Naive thymus-derived CD4-positive, alpha-beta T cell (primary cell): ENCODE measurements at regions of chr6 and their contacts with region 1.

Region 1: DNA sequence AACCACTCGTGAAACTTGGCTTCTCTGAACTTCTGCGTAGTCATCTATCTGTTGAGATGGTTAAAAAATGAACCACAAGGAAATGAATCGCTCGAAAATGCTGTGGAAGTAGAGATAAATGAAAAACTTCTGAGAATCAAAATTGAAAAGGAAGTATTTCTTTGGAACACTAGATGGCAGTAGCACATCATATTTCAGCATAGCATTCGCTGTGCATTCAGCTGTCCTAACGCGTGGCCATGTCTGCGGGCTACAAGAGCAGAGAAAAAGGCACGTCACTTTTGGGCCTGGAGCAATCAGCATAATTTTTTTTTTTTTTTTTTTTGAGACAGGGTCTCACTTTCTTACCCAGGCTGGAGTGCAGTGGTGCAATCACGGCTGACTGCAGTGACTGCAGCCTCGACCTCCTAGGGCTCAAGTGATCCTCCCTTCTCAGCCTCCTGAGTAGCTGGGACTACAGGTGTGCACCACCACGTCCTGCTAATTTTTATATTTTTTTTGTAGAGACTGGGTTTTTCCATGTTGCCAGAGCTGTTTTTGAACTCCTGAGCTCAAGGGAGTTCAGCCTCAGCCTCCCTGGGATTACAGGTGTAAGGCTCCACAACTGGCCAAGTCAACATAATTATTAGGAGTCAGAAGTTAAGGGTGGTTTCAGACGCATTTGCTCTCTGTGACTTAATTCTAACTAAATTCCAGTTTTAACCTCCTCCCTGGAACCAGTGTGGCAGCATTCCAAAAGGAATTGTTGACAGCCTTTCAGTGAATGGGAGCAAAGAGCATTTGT is 8.8 kb upstream of the PERP start:
- DNase-seq: peak in 7 of 9 donors; percentile 39 to 68 (median 57)
- ATAC-seq: peak; percentile 94
- H3K4me3 ChIP-seq: no peak overlapping the region
- H3K4me3 Mint-ChIP-seq: no peak overlapping the region
- H3K27ac ChIP-seq: no peak overlapping the region
- H3K27ac Mint-ChIP-seq: no peak overlapping the region
- H3K4me1 ChIP-seq: peaks cover 0 to 4% of the 10 kb centered on the region in 2 donors
- H3K4me1 Mint-ChIP-seq: peaks cover 5 to 10% (median 7%) of the 10 kb centered on the region in 7 donors
- H3K27me3 ChIP-seq: no peaks in the 10 kb centered on the region
- H3K27me3 Mint-ChIP-seq: peaks cover 21 to 49% (median 30%) of the 10 kb centered on the region in 5 donors

Region 2: DNA sequence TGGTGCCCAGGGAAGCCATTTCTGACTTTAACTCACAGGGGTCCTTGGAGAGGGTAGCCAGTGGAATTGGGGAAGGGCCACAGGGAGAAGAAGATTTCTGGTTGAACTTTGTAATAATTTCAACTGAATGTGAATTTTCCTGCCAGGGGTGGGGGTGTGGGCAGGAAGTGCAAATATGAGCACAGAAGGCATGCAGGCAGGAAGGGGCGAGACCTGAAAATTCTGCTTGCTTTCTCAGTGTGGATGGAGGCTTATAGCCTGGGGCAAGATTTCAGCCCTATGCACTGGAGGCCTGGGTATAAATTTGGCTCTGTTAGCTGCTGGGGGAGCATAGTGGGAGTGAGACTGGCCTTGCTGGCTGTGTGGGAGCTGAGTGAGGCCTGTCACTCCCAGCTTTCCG is 63.3 kb before region 1 on chr6:
- CTCF ChIA-PET with region 1: no interaction called
- POLR2A ChIA-PET with region 1: no interaction called
- intact Hi-C with region 1: no loop called
- DNase-seq: no peak
- ATAC-seq: no peak
- H3K4me3 ChIP-seq: no peak overlapping the region
- H3K4me3 Mint-ChIP-seq: no peak overlapping the region
- H3K27ac ChIP-seq: no peak overlapping the region
- H3K27ac Mint-ChIP-seq: no peak overlapping the region
- H3K4me1 ChIP-seq: no peaks in the 10 kb centered on the region
- H3K4me1 Mint-ChIP-seq: peaks cover 0 to 4% (median 0%) of the 10 kb centered on the region in 7 donors
- H3K27me3 ChIP-seq: no peaks in the 10 kb centered on the region
- H3K27me3 Mint-ChIP-seq: peaks cover 37 to 65% (median 48%) of the 10 kb centered on the region in 5 donors

Region 3: GRCh38 chr6:138211027-138211581 is 95.0 kb after region 1 on chr6:
- CTCF ChIA-PET with region 1: no interaction called
- POLR2A ChIA-PET with region 1: no interaction called
- intact Hi-C with region 1: loop called in 1 of 2 experiments (anchors 1 kb)
- DNase-seq: no peak
- ATAC-seq: no peak
- H3K4me3 ChIP-seq: no peak overlapping the region
- H3K4me3 Mint-ChIP-seq: no peak overlapping the region
- H3K27ac ChIP-seq: no peak overlapping the region
- H3K27ac Mint-ChIP-seq: no peak overlapping the region
- H3K4me1 ChIP-seq: no peaks in the 10 kb centered on the region
- H3K4me1 Mint-ChIP-seq: peaks cover 0 to 2% (median 0%) of the 10 kb centered on the region in 7 donors
- H3K27me3 ChIP-seq: no peaks in the 10 kb centered on the region
- H3K27me3 Mint-ChIP-seq: peaks cover 12 to 48% (median 30%) of the 10 kb centered on the region in 5 donors

Region 4: DNA sequence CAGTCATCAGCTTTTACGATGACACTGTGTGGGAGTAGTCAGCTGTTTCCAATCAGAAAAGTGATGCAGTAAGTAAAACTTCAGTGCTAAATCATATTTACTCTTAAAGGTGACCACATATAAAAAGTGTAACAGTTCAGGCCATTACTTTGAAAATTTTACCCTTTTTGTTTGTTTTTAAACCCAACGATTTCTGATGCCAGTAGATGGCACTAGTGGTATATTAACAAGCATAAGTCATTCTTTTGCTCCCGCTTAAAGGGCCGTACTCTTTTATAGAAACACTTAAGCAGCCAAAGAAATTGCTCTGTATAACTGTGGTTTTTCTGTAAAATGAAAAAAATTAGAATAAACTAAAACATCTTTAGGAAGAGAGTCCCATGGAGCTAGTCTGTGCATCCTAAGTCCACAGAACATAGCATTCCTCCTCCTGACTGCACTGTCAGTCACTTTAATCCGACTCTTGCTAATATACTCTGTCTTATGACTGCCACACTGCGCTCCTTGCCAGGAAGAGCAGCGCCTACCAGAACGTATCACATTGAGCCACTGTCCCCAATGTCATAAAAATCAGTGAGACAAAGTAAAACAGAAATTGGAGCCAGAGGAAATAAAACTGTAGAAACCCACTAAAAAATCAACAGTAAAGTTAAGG is 313.0 kb after region 1 on chr6:
- CTCF ChIA-PET with region 1: interaction called, 11 read pairs
- POLR2A ChIA-PET with region 1: no interaction called
- intact Hi-C with region 1: loop called (anchors 1 kb)
- DNase-seq: peak in 7 of 9 donors; percentile 28 to 62 (median 43)
- ATAC-seq: peak; percentile 71
- H3K4me3 ChIP-seq: no peak overlapping the region
- H3K4me3 Mint-ChIP-seq: no peak overlapping the region
- H3K27ac ChIP-seq: no peak overlapping the region
- H3K27ac Mint-ChIP-seq: no peak overlapping the region
- H3K4me1 ChIP-seq: no peaks in the 10 kb centered on the region
- H3K4me1 Mint-ChIP-seq: peaks cover 0 to 6% (median 0%) of the 10 kb centered on the region in 7 donors
- H3K27me3 ChIP-seq: no peaks in the 10 kb centered on the region
- H3K27me3 Mint-ChIP-seq: peaks cover 0 to 7% (median 5%) of the 10 kb centered on the region in 5 donors

Region 5: GRCh38 chr6:138517635-138518034 is 401.6 kb after region 1 on chr6:
- CTCF ChIA-PET with region 1: interaction called, 31 read pairs
- POLR2A ChIA-PET with region 1: no interaction called
- intact Hi-C with region 1: loop called (anchors 1 kb)
- DNase-seq: peak; percentile 15 to 63 (median 40)
- ATAC-seq: peak; percentile 80
- H3K4me3 ChIP-seq: no peak overlapping the region
- H3K4me3 Mint-ChIP-seq: no peak overlapping the region
- H3K27ac ChIP-seq: no peak overlapping the region
- H3K27ac Mint-ChIP-seq: no peak overlapping the region
- H3K4me1 ChIP-seq: peaks cover 0 to 13% of the 10 kb centered on the region in 2 donors
- H3K4me1 Mint-ChIP-seq: peaks cover 0 to 23% (median 7%) of the 10 kb centered on the region in 7 donors
- H3K27me3 ChIP-seq: no peaks in the 10 kb centered on the region
- H3K27me3 Mint-ChIP-seq: peaks cover 9 to 17% (median 12%) of the 10 kb centered on the region in 5 donors

Region 6: DNA sequence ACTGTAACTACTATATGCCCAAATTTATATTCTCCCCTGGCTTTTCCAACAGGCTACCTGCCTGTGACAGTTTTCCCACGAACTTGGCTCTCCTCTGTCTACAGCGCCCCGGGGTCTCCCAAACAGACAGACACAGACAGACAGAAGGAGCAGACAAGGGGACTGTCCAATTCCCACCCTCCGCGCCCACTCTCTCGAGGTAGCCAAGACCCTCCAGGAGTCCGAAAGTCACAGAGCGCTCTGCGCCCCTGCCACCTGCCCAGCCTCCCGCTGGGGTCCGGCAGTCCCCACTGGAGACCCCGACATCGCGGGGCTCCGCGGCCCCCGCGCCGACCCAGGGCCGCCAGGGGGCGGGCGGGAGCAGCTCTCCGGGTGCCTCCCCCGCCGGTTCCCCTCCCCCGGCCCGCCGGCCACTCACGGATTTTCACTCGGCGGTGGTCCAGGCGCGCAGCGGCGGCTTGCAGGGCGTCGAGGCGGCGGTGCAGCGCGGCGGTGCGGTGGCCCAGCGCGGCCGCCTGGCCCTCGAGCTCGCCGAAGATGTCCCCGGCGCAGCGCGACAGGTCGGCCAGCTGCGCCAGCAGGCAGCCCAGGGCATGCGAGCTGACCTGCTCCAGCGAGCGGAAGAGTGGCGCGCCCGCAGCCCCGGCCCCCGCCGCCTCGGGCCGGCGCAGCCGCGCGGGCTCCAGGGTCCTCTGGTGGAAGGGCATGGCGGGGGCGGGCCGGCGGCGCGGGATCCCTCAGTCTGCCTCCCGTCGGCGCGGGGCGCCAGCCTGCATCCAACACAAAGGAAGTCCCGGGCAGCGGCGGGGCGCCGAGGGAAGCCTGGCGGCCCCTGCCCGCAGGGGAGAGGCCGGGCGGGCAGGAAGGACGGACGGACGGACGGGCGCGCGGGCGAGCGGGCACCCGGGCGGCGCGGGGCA is 576.2 kb after region 1 on chr6:
- CTCF ChIA-PET with region 1: no interaction called
- POLR2A ChIA-PET with region 1: no interaction called
- intact Hi-C with region 1: loop called (anchors 5 to 10 kb)
- DNase-seq: peak; percentile 20 to 74 (median 37)
- ATAC-seq: peak; percentile 80
- H3K4me3 ChIP-seq: peak overlapping the region; percentile 22
- H3K4me3 Mint-ChIP-seq: peak overlapping the region; percentile 53 to 88 (median 86)
- H3K27ac ChIP-seq: no peak overlapping the region
- H3K27ac Mint-ChIP-seq: peak overlapping the region in 2 of 9 donors; percentile 49 to 77
- H3K4me1 ChIP-seq: peaks cover 0 to 3% of the 10 kb centered on the region in 2 donors
- H3K4me1 Mint-ChIP-seq: peaks cover 0 to 13% (median 9%) of the 10 kb centered on the region in 7 donors
- H3K27me3 ChIP-seq: peaks cover 0 to 6% of the 10 kb centered on the region in 2 donors
- H3K27me3 Mint-ChIP-seq: peaks cover 23 to 56% (median 46%) of the 10 kb centered on the region in 5 donors

Region 7: DNA sequence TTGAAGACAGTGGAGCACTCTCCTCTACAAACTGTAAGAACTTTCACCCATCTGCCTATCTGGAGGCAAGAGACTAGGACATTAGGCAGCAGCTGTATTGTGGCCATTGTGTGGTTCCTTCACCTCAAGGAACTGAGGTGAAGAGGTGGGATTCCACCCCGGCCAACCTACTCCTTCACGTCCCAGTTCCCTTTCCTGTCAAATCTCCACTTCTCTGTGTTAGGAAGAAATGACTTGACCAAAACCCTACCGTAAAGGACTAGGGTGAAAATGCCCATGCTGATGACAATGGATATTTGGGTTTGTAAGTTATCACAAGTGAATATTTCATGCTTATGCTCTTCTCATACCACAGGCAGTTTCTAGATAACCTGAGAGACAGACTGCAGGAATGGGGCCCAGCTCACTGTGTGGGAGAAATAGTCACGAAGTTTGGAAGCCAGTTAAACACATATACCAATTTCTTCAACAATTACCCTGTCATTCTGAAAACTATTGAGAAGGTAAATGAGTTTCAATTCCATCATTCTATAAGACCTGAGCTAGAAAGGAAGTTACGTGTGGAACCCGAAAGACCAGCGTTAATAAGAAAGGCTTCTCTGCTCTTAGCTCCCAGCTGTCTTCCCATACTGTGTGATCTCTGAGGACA is 766.4 kb after region 1 on chr6:
- CTCF ChIA-PET with region 1: no interaction called
- POLR2A ChIA-PET with region 1: no interaction called
- intact Hi-C with region 1: no loop called
- DNase-seq: no peak
- ATAC-seq: no peak
- H3K4me3 ChIP-seq: no peak overlapping the region
- H3K4me3 Mint-ChIP-seq: no peak overlapping the region
- H3K27ac ChIP-seq: no peak overlapping the region
- H3K27ac Mint-ChIP-seq: peak overlapping the region in 1 of 9 donors; percentile 26
- H3K4me1 ChIP-seq: no peaks in the 10 kb centered on the region
- H3K4me1 Mint-ChIP-seq: no peaks in the 10 kb centered on the region
- H3K27me3 ChIP-seq: no peaks in the 10 kb centered on the region
- H3K27me3 Mint-ChIP-seq: peaks cover 0 to 4% (median 0%) of the 10 kb centered on the region in 5 donors